Endothelial cell of umbilical vein (primary cell): ENCODE measurements at regions of chr19 and their contacts with region 1.

Region 1: DNA sequence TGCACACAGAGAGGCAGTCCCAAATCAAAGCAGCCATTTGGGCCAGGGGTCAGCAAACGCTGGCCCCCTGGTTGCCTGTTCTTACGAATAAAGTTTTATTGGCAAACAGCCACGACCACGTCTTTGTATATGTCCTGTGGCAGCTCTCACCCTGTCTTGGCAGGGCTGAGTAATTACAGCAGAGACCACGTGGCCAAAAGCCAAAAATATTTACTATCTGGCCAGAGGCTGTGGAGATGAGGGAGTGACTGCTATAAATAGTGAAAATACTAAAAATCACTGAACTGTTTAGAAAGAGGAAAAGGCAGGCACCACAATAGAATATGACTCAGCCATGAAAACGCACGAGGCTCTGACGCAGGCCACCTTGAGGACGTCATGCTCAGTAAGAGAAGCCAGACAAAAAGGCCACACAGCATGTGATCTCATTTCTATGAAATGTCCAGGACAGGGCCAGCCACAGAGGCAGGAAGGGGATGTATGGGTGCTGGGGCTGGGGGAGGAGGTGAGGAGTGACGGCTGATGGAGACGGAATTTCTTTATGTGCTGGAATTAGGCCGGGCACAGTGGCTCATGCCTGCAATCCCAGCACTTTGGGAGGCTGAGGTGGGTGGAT is 29.4 kb downstream of the SMIM24 start:
- DNase-seq: peak; percentile 99
- H3K4me3 ChIP-seq: no peak overlapping the region
- H3K27ac ChIP-seq: peak overlapping the region; percentile 94
- H3K4me1 ChIP-seq: peaks cover 11% of the 10 kb centered on the region
- H3K27me3 ChIP-seq: no peaks in the 10 kb centered on the region
- CTCF ChIP-seq: no peak
- POLR2A ChIP-seq: no peak

Region 2: GRCh38 chr19:3403489-3404323 is 47.2 kb before region 1 on chr19:
- CTCF ChIA-PET with region 1: no interaction called
- POLR2A ChIA-PET with region 1: no interaction called
- dilution Hi-C with region 1: no loop called
- intact Hi-C with region 1: loop called (anchors 1 kb)
- DNase-seq: peak; percentile 87
- H3K4me3 ChIP-seq: no peak overlapping the region
- H3K27ac ChIP-seq: peak overlapping the region; percentile 81
- H3K4me1 ChIP-seq: peaks cover 22% of the 10 kb centered on the region
- H3K27me3 ChIP-seq: no peaks in the 10 kb centered on the region
- CTCF ChIP-seq: no peak
- POLR2A ChIP-seq: no peak

Region 3: GRCh38 chr19:3434712-3435553 is 16.0 kb before region 1 on chr19:
- CTCF ChIA-PET with region 1: interaction called, 5 read pairs
- POLR2A ChIA-PET with region 1: no interaction called
- dilution Hi-C with region 1: no loop called
- intact Hi-C with region 1: loop called (anchors 1 kb)
- DNase-seq: peak; percentile 97
- H3K4me3 ChIP-seq: peak overlapping the region in 2 of 3 experiments; percentile 42 to 51
- H3K27ac ChIP-seq: peak overlapping the region; percentile 74
- H3K4me1 ChIP-seq: peaks cover 16% of the 10 kb centered on the region
- H3K27me3 ChIP-seq: no peaks in the 10 kb centered on the region
- CTCF ChIP-seq: no peak
- POLR2A ChIP-seq: peak; percentile 83